ENCODE measurements at regions of chr3 and their contacts with region 1.

Region 1: DNA sequence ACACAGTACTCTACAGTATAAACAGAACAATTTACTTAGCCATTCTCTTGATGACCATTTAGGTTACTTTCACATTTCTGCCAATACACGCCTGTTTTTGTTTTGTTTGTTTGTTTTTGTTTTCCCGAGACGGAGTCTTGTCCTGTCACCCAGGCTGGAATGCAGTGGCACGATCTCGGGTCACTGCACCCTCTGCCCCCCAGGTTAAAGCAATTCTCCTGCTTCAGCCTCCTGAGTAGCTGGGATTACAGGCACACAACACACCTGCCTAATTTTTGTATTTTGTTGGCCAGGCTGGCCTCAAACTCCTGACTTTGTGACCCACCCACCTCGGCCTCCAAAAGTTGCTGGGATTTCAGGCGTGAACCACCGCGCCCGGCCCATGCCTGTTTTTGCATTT is 92.2 kb downstream of the TMCC1 start:
- DNase-seq: no peak
- H3K4me3 ChIP-seq: no peak overlapping the region
- H3K27ac ChIP-seq: no peak overlapping the region
- H3K4me1 ChIP-seq: peaks cover 10% of the 10 kb centered on the region
- H3K27me3 ChIP-seq: no peaks in the 10 kb centered on the region
- CTCF ChIP-seq: no peak

Region 2: GRCh38 chr3:129453732-129454131 is 347.6 kb before region 1 on chr3:
- CTCF ChIA-PET with region 1: no interaction called
- POLR2A ChIA-PET with region 1: interaction called, 10 read pairs
- intact Hi-C with region 1: no loop called
- DNase-seq: no peak
- H3K4me3 ChIP-seq: no peak overlapping the region
- H3K27ac ChIP-seq: no peak overlapping the region
- H3K4me1 ChIP-seq: no peaks in the 10 kb centered on the region
- H3K27me3 ChIP-seq: no peaks in the 10 kb centered on the region
- CTCF ChIP-seq: no peak

Measured in PC-9 (cell line).